ENCODE measurements at regions of chr6 and their contacts with region 1.

Region 1: DNA sequence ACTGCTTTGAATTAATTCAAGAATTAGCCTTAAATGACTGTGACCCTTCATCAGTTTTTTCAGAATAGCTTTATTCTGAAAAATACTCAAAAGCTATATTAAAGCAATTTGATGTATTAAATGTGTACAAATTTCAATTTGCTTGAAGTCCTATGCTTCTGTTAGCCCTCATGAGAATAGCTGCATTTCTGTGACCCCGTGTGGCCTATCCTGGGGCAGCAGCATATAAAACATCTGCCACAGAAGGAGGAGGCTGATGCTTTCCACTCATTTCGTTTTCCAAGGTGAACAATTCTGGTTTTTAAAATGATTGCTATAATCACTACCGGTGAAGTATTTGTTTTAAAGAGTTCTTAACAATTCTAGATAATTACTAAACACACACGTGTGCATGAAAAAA is 360.3 kb downstream of the BTBD9 start:
- DNase-seq: no peak
- H3K4me3 ChIP-seq: no peak overlapping the region
- H3K27ac ChIP-seq: no peak overlapping the region
- H3K4me1 ChIP-seq: peaks cover 0 to 10% (median 1%) of the 10 kb centered on the region in 4 experiments; a peak in 2 of 7 replicates
- H3K27me3 ChIP-seq: peaks cover 0 to 1% (median 0%) of the 10 kb centered on the region in 4 experiments; a peak in 1 of 7 replicates
- CTCF ChIP-seq: peak; percentile 25 to 34 (median 31)
- EP300 ChIP-seq: no peak
- POLR2A ChIP-seq: no peak
- RAD21 ChIP-seq: peak; percentile 58 to 70

Region 2: GRCh38 chr6:38266921-38267354 is 12.5 kb before region 1 on chr6:
- CTCF ChIA-PET with region 1: interaction called, 19 read pairs
- POLR2A ChIA-PET with region 1: no interaction called
- DNase-seq: no peak
- H3K4me3 ChIP-seq: no peak overlapping the region
- H3K27ac ChIP-seq: no peak overlapping the region
- H3K4me1 ChIP-seq: peaks cover 6 to 30% (median 21%) of the 10 kb centered on the region in 4 experiments
- H3K27me3 ChIP-seq: no peaks in the 10 kb centered on the region; a peak in 1 of 7 replicates
- CTCF ChIP-seq: no peak
- EP300 ChIP-seq: no peak
- POLR2A ChIP-seq: no peak
- RAD21 ChIP-seq: no peak

Region 3: GRCh38 chr6:38290133-38290799 is 10.8 kb after region 1 on chr6:
- CTCF ChIA-PET with region 1: interaction called, 19 read pairs
- POLR2A ChIA-PET with region 1: no interaction called
- DNase-seq: no peak
- H3K4me3 ChIP-seq: no peak overlapping the region
- H3K27ac ChIP-seq: no peak overlapping the region
- H3K4me1 ChIP-seq: no peaks in the 10 kb centered on the region
- H3K27me3 ChIP-seq: no peaks in the 10 kb centered on the region
- CTCF ChIP-seq: no peak
- EP300 ChIP-seq: no peak
- POLR2A ChIP-seq: no peak
- RAD21 ChIP-seq: no peak

Measured in H1 (cell line).